Heart right ventricle (tissue), 16 donors: ENCODE measurements at regions of chr18 and their contacts with region 1.

Region 1: GRCh38 chr18:58087917-58088692 is 44.1 kb downstream of the NEDD4L start:
- DNase-seq: no peak
- ATAC-seq: no peak
- H3K4me3 ChIP-seq: no peak overlapping the region
- H3K27ac ChIP-seq: no peak overlapping the region
- H3K4me1 ChIP-seq: no peaks in the 10 kb centered on the region
- H3K27me3 ChIP-seq: no peaks in the 10 kb centered on the region
- CTCF ChIP-seq: no peak

Region 2: GRCh38 chr18:58024139-58024538 is 64.0 kb before region 1 on chr18:
- intact Hi-C with region 1: loop called in 1 of 10 experiments (anchors 10 kb)
- DNase-seq: no peak
- ATAC-seq: no peak
- H3K4me3 ChIP-seq: no peak overlapping the region
- H3K27ac ChIP-seq: no peak overlapping the region
- H3K4me1 ChIP-seq: no peaks in the 10 kb centered on the region
- H3K27me3 ChIP-seq: peaks cover 0 to 8% (median 0%) of the 10 kb centered on the region in 7 donors
- CTCF ChIP-seq: no peak